Activated B cell treated with CpG ODN at 0.5 μM for 24 hours (primary cell): ENCODE measurements at regions of chr15 and their contacts with region 1.

Region 1: GRCh38 chr15:69734688-69735087 is 282.1 kb downstream of the RPLP1 start:
- DNase-seq: no peak
- ATAC-seq: no peak
- H3K4me3 Mint-ChIP-seq: no peak overlapping the region
- H3K27ac Mint-ChIP-seq: no peak overlapping the region
- H3K4me1 Mint-ChIP-seq: no peaks in the 10 kb centered on the region
- H3K27me3 Mint-ChIP-seq: peaks cover 16% of the 10 kb centered on the region
- CTCF ChIP-seq: no peak

Region 2: GRCh38 chr15:69713726-69714559 is 20.7 kb before region 1 on chr15:
- CTCF ChIA-PET with region 1: no interaction called
- POLR2A ChIA-PET with region 1: no interaction called
- intact Hi-C with region 1: no loop called
- DNase-seq: no peak
- ATAC-seq: peak; percentile 73
- H3K4me3 Mint-ChIP-seq: no peak overlapping the region
- H3K27ac Mint-ChIP-seq: no peak overlapping the region
- H3K4me1 Mint-ChIP-seq: peaks cover 25% of the 10 kb centered on the region
- H3K27me3 Mint-ChIP-seq: peaks cover 3% of the 10 kb centered on the region
- CTCF ChIP-seq: no peak

Region 3: DNA sequence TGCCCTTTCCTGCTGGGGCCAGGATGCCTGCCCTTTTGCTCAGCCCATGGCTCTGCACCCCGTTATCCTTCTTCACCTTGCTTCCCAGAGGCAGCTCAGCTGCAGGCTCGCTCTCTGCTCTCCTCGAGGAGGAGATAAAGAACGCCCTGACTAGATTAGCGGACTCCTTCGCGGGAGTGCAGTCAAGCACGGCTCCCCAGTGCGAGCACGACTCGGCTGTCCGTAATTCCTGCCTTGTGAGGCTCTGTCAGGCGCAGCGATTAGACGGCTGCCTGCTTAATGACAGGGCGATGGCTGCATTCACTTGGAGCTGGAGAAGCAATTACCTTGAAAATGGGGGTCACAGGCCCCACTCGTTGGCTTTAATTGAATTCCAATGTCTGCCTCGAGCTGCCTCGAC is 337.1 kb after region 1 on chr15:
- CTCF ChIA-PET with region 1: no interaction called
- POLR2A ChIA-PET with region 1: no interaction called
- intact Hi-C with region 1: loop called (anchors 5 kb)
- DNase-seq: no peak
- ATAC-seq: peak; percentile 59
- H3K4me3 Mint-ChIP-seq: no peak overlapping the region
- H3K27ac Mint-ChIP-seq: peak overlapping the region; percentile 56
- H3K4me1 Mint-ChIP-seq: peaks cover 50% of the 10 kb centered on the region
- H3K27me3 Mint-ChIP-seq: no peaks in the 10 kb centered on the region
- CTCF ChIP-seq: no peak